ENCODE measurements at regions of chr17 and their contacts with region 1.

Region 1: GRCh38 chr17:49788478-49789242 is at the start of gene KAT7:
- DNase-seq: peak; percentile 100
- total RNA-seq, gene KAT7: 63.2 TPM

Region 2: GRCh38 chr17:49707608-49708514 is 80.8 kb before region 1 on chr17 and contains the start of gene SLC35B1:
- intact Hi-C with region 1: loop called (anchors 10 kb)
- DNase-seq: peak; percentile 100
- total RNA-seq, gene SLC35B1: 73.8 TPM

Region 3: GRCh38 chr17:49753959-49754391 is 34.7 kb before region 1 on chr17:
- intact Hi-C with region 1: no loop called
- DNase-seq: no peak

Region 4: GRCh38 chr17:49822829-49823228 is 34.2 kb after region 1 on chr17:
- intact Hi-C with region 1: no loop called
- DNase-seq: no peak

Region 5: GRCh38 chr17:49851387-49852291 is 63.0 kb after region 1 on chr17:
- intact Hi-C with region 1: loop called (anchors 1 kb)
- DNase-seq: peak; percentile 89